Esophagus muscularis mucosa (tissue), 4 donors: ENCODE measurements at regions of chr11 and their contacts with region 1.

Region 1: GRCh38 chr11:108593214-108593922 is at the start of gene EXPH5:
- DNase-seq: peak; percentile 95
- H3K4me3 ChIP-seq: peak within 1 kb of the TSS; percentile 66 to 70 (median 68)
- H3K27ac ChIP-seq: peak within 1 kb of the TSS; percentile 28 to 60 (median 38)
- H3K4me1 ChIP-seq: peaks cover 0 to 17% (median 10%) of the 10 kb centered on the region in 4 donors
- H3K27me3 ChIP-seq: peaks cover 0 to 12% (median 2%) of the 10 kb centered on the region in 4 donors
- CTCF ChIP-seq: no peak
- EP300 ChIP-seq: no peak
- POLR2A ChIP-seq: no peak
- total RNA-seq, gene EXPH5: 1.4 to 1.8 (median 1.6) TPM

Region 2: DNA sequence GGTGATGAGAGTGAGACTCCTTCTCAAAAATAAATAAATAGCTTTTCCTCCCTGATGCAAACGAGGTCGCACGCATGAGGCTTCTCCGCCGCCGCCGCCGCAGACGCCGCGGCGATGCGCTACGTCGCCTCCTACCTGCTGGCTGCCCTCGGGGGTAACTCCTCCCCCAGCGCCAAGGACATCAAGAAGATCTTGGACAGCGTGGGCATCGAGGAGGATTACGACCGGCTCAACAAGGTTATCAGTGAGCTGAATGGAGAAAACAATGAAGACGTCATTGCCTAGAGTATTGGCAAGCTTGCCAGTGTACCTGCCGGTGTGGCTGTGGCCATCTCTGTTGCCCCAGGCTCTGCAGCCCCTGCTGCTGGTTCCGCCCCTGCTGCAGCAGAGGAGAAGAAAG is 685.1 kb before region 1 on chr11:
- intact Hi-C with region 1: no loop called
- DNase-seq: no peak
- H3K4me3 ChIP-seq: no peak overlapping the region
- H3K27ac ChIP-seq: no peak overlapping the region
- H3K4me1 ChIP-seq: no peaks in the 10 kb centered on the region
- H3K27me3 ChIP-seq: peaks cover 0 to 11% (median 0%) of the 10 kb centered on the region in 4 donors
- CTCF ChIP-seq: no peak
- EP300 ChIP-seq: no peak
- POLR2A ChIP-seq: no peak

Region 3: GRCh38 chr11:108497317-108498045 is 95.9 kb before region 1 on chr11:
- intact Hi-C with region 1: loop called (anchors 10 kb)
- DNase-seq: peak; percentile 95
- H3K4me3 ChIP-seq: peak overlapping the region; percentile 83 to 90 (median 86)
- H3K27ac ChIP-seq: peak overlapping the region; percentile 97 to 99 (median 98)
- H3K4me1 ChIP-seq: peaks cover 6 to 36% (median 23%) of the 10 kb centered on the region in 4 donors
- H3K27me3 ChIP-seq: no peaks in the 10 kb centered on the region
- CTCF ChIP-seq: no peak
- EP300 ChIP-seq: no peak
- POLR2A ChIP-seq: peak; percentile 24